Activated CD4-positive, alpha-beta T cell treated with anti-CD3 and anti-CD28 coated beads, Interleukin-2, amount 10 ng/mL, durations not matched to agents 7 days and 5 days (primary cell): ENCODE measurements at regions of chr16 and their contacts with region 1.

Region 1: GRCh38 chr16:67716097-67716496 is 3.0 kb downstream of the GFOD2 start:
- DNase-seq: no peak
- H3K4me3 Mint-ChIP-seq: no peak overlapping the region
- H3K27ac Mint-ChIP-seq: no peak overlapping the region
- H3K4me1 Mint-ChIP-seq: peaks cover 34% of the 10 kb centered on the region
- H3K27me3 Mint-ChIP-seq: no peaks in the 10 kb centered on the region

Region 2: GRCh38 chr16:67726106-67727034 is 10.3 kb after region 1 on chr16:
- CTCF ChIA-PET with region 1: interaction called, 12 read pairs
- POLR2A ChIA-PET with region 1: no interaction called
- DNase-seq: no peak
- H3K4me3 Mint-ChIP-seq: no peak overlapping the region
- H3K27ac Mint-ChIP-seq: no peak overlapping the region
- H3K4me1 Mint-ChIP-seq: no peaks in the 10 kb centered on the region
- H3K27me3 Mint-ChIP-seq: no peaks in the 10 kb centered on the region